CD14-positive monocyte (primary cell): ENCODE measurements at regions of chr3 and their contacts with region 1.

Region 1: DNA sequence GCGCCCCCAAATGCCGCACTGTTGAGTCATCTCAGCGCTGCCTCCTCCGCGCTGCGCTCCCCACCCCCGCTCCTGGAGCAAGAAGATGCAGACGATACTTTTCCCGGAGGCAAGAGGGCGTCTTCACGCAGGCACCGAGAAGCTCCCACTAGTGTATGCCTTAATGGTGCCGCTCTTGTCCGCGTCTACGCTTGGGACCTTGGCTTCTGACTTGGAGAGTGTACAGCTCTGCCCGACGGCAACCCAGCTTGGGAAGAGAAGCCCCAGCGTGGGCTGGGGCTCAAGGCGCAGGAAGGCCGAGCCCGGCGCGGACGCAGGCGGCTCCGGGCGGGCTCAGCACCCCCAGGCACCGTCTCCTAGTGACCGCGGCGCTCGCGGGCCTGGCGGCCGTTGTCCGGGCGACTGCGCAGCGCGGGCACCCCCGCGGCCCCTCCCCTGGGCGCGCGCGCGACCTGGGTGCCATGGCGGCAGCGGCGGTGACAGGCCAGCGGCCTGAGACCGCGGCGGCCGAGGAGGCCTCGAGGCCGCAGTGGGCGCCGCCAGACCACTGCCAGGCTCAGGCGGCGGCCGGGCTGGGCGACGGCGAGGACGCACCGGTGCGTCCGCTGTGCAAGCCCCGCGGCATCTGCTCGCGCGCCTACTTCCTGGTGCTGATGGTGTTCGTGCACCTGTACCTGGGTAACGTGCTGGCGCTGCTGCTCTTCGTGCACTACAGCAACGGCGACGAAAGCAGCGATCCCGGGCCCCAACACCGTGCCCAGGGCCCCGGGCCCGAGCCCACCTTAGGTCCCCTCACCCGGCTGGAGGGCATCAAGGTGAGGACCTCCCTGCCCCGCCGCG is at the start of gene P4HTM:
- DNase-seq: peak; percentile 57 to 74 (median 57)
- H3K4me3 ChIP-seq: peak within 1 kb of the TSS; percentile 83 to 96 (median 96)
- H3K4me3 Mint-ChIP-seq: peak within 1 kb of the TSS; percentile 93 to 95
- H3K27ac ChIP-seq: peak within 1 kb of the TSS; percentile 63 to 75
- H3K27ac Mint-ChIP-seq: peak within 1 kb of the TSS; percentile 82 to 94 (median 91)
- H3K4me1 ChIP-seq: peaks cover 21 to 27% of the 10 kb centered on the region in 2 donors
- H3K4me1 Mint-ChIP-seq: peaks cover 27% of the 10 kb centered on the region
- H3K27me3 ChIP-seq: no peaks in the 10 kb centered on the region
- H3K27me3 Mint-ChIP-seq: no peaks in the 10 kb centered on the region
- CTCF ChIP-seq: peak; percentile 22
- polyA plus RNA-seq, gene P4HTM: 14.9 to 40.0 (median 18.1) TPM

Region 2: DNA sequence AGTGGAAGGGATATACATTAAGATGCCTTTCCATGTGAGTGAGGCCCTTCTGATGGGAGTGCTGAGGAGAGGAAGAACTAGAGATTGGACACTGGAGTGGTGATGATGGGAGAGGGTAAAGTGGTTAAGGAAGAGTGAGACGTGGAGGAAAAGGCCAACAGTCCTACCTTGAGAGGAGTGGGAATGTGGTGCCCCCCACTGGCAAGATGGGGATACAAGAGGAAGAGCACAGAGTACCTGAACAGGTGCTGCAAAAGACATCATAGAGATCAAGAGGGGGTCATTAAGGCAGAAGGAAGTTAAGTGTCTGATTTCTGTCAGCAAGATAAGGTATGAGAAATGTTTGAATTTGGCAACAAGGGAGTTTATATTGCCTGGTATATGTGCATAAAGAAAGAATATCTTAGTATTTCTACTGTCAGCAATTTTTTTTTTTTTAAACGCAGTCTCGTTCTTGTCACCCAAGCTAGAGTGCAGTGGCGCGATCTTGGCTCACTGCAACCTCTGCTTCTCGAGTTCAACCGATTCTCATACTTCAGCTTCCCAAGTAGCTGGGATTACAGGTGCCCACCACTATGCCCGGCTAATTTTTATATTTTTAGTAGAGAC is 37.4 kb before region 1 on chr3:
- intact Hi-C with region 1: no loop called
- DNase-seq: peak in 1 of 3 donors; percentile 10
- H3K4me3 ChIP-seq: no peak overlapping the region
- H3K4me3 Mint-ChIP-seq: no peak overlapping the region
- H3K27ac ChIP-seq: no peak overlapping the region
- H3K27ac Mint-ChIP-seq: peak overlapping the region in 2 of 7 donors; percentile 37 to 56
- H3K4me1 ChIP-seq: peaks cover 0 to 3% of the 10 kb centered on the region in 2 donors
- H3K4me1 Mint-ChIP-seq: peaks cover 13% of the 10 kb centered on the region
- H3K27me3 ChIP-seq: no peaks in the 10 kb centered on the region
- H3K27me3 Mint-ChIP-seq: peaks cover 0 to 2% (median 0%) of the 10 kb centered on the region in 3 donors
- CTCF ChIP-seq: peak; percentile 31

Region 3: GRCh38 chr3:49007068-49007770 is 17.2 kb after region 1 on chr3 and contains the start of gene WDR6:
- intact Hi-C with region 1: loop called in 1 of 2 experiments (anchors 2 kb)
- DNase-seq: peak; percentile 94 to 97 (median 95)
- H3K4me3 ChIP-seq: peak within 1 kb of the TSS; percentile 57 to 94 (median 93)
- H3K4me3 Mint-ChIP-seq: peak within 1 kb of the TSS; percentile 95 to 98
- H3K27ac ChIP-seq: peak within 1 kb of the TSS; percentile 90 to 97
- H3K27ac Mint-ChIP-seq: peak within 1 kb of the TSS; percentile 94 to 99 (median 99)
- H3K4me1 ChIP-seq: peaks cover 20 to 34% of the 10 kb centered on the region in 2 donors
- H3K4me1 Mint-ChIP-seq: peaks cover 23% of the 10 kb centered on the region
- H3K27me3 ChIP-seq: no peaks in the 10 kb centered on the region
- H3K27me3 Mint-ChIP-seq: peaks cover 0 to 2% (median 1%) of the 10 kb centered on the region in 3 donors
- CTCF ChIP-seq: peak; percentile 45
- polyA plus RNA-seq, gene WDR6: 30.6 to 103 (median 46.3) TPM

Region 4: DNA sequence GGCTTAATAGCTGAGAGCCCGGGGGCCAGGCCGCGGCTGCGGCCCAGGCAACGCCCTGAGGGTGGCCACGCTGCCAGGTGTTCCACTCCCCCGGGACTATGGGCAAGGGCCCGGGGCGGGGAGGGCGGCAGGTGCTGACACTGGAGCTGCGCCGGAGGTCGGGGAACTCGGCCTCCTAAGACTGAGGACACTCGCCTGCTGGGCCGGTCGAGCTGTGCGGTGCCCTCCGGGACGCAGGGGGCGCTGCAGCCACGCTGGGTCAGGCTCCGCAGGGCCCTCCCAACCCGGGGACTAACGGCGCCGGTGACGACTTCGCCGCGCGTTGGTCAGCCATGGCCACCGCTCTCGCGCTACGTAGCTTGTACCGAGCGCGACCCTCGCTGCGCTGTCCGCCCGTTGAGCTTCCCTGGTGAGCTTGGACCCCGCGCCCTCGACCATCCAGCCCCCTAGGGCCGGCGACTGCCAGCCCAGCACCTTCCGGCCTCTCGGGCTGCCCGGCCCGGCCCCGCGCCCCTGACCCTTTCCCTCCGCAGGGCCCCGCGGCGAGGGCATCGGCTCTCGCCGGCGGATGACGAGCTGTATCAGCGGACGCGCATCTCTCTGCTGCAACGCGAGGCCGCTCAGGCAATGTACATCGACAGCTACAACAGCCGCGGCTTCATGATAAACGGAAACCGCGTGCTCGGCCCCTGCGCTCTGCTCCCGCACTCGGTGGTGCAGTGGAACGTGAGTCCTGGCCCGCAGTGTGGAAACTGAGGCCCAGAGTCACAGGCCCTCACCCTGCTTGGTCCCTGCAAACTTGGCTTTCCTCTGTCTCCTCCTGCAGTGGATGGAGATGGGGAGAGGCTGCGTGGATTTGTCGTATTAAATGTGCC is 32.0 kb after region 1 on chr3 and contains the start of gene NDUFAF3:
- intact Hi-C with region 1: loop called in 1 of 2 experiments (anchors 5 kb)
- DNase-seq: peak; percentile 89 to 93 (median 93)
- H3K4me3 ChIP-seq: peak within 1 kb of the TSS; percentile 71 to 90 (median 84)
- H3K4me3 Mint-ChIP-seq: peak within 1 kb of the TSS; percentile 90 to 92
- H3K27ac ChIP-seq: peak within 1 kb of the TSS; percentile 98
- H3K27ac Mint-ChIP-seq: peak within 1 kb of the TSS; percentile 96 to 99 (median 98)
- H3K4me1 ChIP-seq: peaks cover 41 to 49% of the 10 kb centered on the region in 2 donors
- H3K4me1 Mint-ChIP-seq: peaks cover 34% of the 10 kb centered on the region
- H3K27me3 ChIP-seq: no peaks in the 10 kb centered on the region
- H3K27me3 Mint-ChIP-seq: peaks cover 0 to 2% (median 0%) of the 10 kb centered on the region in 3 donors
- CTCF ChIP-seq: peak; percentile 100
- polyA plus RNA-seq, gene NDUFAF3: 42.1 to 93.4 (median 88.8) TPM

Region 5: DNA sequence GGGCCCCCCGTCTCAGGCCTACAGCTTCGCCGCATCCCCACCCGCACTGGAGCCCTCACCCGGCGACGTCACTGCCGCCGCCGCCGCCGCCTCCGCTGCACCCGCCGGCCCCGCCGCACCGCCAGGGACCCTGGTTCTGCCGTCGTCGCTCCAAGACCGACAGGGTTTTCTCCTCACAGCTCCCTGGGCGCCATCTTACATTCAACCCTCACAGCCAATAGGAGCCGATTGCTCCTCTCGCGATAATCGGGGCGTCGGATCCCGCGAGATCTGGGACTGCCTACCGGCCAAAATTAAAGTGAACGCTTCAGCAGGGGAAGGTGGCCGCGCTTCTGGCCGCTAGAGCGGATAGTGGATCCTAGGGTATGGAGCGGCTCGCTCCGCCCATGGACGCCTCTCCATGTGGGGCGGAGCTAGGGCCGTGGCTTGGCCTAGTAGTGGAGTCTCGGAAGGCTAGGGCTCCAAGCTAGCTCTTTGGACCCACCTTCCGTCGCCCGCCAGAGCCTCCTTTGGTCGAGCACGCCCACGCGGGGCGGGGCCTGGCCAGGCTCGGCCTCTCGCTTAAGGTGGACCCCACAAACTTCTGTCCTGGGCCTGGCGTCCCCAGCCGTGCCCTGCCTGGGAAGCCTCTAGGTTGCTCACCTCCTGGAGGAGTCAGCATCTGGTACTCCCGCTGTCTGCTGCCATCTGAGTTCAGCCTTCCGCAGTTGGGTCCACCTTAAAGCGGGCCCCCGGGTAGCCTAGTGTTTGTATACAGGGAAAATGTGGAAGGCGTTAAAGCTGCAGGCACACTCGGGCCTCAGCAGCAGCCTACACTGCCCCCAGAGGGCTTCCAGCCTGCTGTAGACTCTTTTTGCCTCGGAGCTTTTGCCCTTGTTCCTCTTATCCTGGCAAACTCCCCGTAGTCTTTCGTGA is 104.1 kb after region 1 on chr3 and contains the start of gene QRICH1:
- intact Hi-C with region 1: loop called in 1 of 2 experiments (anchors 5 kb)
- DNase-seq: peak; percentile 94 to 96 (median 95)
- H3K4me3 ChIP-seq: peak within 1 kb of the TSS; percentile 55 to 87 (median 78)
- H3K4me3 Mint-ChIP-seq: peak within 1 kb of the TSS; percentile 87 to 93
- H3K27ac ChIP-seq: peak within 1 kb of the TSS; percentile 75 to 93
- H3K27ac Mint-ChIP-seq: peak within 1 kb of the TSS; percentile 92 to 98 (median 96)
- H3K4me1 ChIP-seq: peaks cover 20 to 31% of the 10 kb centered on the region in 2 donors
- H3K4me1 Mint-ChIP-seq: peaks cover 21% of the 10 kb centered on the region
- H3K27me3 ChIP-seq: no peaks in the 10 kb centered on the region
- H3K27me3 Mint-ChIP-seq: no peaks in the 10 kb centered on the region
- CTCF ChIP-seq: peak; percentile 49
- polyA plus RNA-seq, gene QRICH1: 9.3 to 150 (median 16.1) TPM

Region 6: DNA sequence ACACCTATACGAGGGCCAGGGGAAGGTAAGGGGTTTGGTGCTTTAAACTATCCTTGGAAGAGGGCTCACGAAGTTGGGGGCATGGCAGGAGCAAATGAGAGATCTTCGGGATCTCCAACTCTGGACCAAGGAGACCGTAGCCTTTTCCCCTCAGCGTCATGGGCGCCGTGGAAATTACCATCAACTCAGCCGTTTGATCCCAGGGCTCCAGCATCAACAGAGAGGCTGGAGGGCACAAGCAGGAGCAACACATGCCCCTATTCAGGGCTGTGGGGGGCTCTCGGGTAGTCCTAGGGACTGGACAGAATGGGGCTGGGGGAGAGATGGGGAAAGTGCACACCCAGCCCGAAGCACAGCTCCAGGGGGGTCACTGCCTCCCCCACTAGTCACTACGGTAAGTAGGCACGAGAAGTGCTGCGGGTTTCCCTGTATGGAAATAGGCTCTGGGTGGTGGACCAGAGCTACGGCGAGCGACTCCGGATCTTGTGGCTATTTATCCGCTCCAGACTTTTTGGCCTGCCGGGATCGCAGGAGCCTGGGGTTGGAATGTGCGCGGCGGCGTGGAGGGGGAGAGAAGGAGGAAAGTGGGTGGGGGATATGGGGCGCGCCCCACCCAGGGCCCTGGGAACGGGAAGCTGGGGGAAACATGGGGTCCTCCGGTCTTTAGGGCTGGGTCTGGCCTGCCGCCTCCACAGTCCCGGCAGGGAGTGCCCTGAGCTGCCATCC is 143.4 kb after region 1 on chr3:
- intact Hi-C with region 1: loop called in 1 of 2 experiments (anchors 10 kb)
- DNase-seq: peak; percentile 30 to 51 (median 31)
- H3K4me3 ChIP-seq: peak overlapping the region; percentile 30 to 78 (median 58)
- H3K4me3 Mint-ChIP-seq: peak overlapping the region; percentile 82 to 92
- H3K27ac ChIP-seq: peak overlapping the region in 1 of 2 donors; percentile 54
- H3K27ac Mint-ChIP-seq: peak overlapping the region; percentile 12 to 70 (median 60)
- H3K4me1 ChIP-seq: peaks cover 14 to 20% of the 10 kb centered on the region in 2 donors
- H3K4me1 Mint-ChIP-seq: peaks cover 29% of the 10 kb centered on the region
- H3K27me3 ChIP-seq: no peaks in the 10 kb centered on the region
- H3K27me3 Mint-ChIP-seq: peaks cover 0 to 3% (median 2%) of the 10 kb centered on the region in 3 donors
- CTCF ChIP-seq: no peak

Region 7: GRCh38 chr3:49158108-49158709 is 168.2 kb after region 1 on chr3:
- intact Hi-C with region 1: loop called (anchors 5 to 10 kb)
- DNase-seq: peak; percentile 33 to 49 (median 44)
- H3K4me3 ChIP-seq: no peak overlapping the region
- H3K4me3 Mint-ChIP-seq: no peak overlapping the region
- H3K27ac ChIP-seq: no peak overlapping the region
- H3K27ac Mint-ChIP-seq: peak overlapping the region in 1 of 7 donors; percentile 21
- H3K4me1 ChIP-seq: peaks cover 10 to 18% of the 10 kb centered on the region in 2 donors
- H3K4me1 Mint-ChIP-seq: peaks cover 12% of the 10 kb centered on the region
- H3K27me3 ChIP-seq: no peaks in the 10 kb centered on the region
- H3K27me3 Mint-ChIP-seq: peaks cover 0 to 3% (median 3%) of the 10 kb centered on the region in 3 donors
- CTCF ChIP-seq: peak; percentile 66